Mammary epithelial cell (primary cell): ENCODE measurements at regions of chr3 and their contacts with region 1.

Region 1: DNA sequence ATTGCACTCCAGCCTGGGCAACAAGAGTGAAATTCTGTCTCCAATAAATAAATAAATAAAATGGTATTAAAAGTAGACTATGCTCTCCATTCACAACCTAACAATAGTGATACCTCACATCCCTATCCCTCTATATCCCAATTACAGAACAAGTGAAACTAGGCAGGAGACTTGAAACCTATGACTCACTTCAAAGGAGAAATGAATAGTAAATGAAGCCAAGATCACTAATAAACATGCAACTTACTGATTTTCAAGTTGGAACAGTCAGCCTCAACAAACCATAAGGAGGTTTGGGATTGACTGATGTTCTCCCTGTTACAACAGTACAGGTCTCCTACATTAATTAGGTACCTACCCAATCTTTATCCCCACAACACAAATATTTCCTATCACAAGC is 103.4 kb downstream of the GSK3B start:
- DNase-seq: peak; percentile 78
- H3K4me3 ChIP-seq: no peak overlapping the region
- H3K27ac ChIP-seq: peak overlapping the region; percentile 16
- H3K4me1 ChIP-seq: peaks cover 12% of the 10 kb centered on the region
- H3K27me3 ChIP-seq: no peaks in the 10 kb centered on the region
- CTCF ChIP-seq: no peak

Region 2: DNA sequence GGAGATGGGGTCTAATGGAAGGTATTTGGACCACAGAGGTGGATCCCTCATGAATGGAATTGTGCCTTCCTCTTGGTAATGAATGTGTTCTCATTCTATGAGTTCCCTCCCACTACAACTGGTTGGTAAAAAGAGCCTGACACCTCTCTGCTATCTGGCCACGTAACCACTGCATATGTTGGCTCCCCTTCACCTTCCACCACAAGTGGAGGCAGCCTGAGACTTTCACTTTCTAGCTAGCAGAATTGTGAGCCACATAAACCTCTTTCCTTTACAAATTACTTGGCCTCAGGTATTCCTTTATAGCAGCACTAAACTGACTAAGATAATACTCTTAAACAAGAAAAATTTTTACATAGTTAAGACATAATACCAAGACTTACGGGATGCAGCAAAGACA is 53.7 kb before region 1 on chr3:
- CTCF ChIA-PET with region 1: no interaction called
- dilution Hi-C with region 1: no loop called
- in situ Hi-C with region 1: no loop called
- intact Hi-C with region 1: no loop called
- DNase-seq: peak; percentile 5
- H3K4me3 ChIP-seq: no peak overlapping the region
- H3K27ac ChIP-seq: no peak overlapping the region
- H3K4me1 ChIP-seq: no peaks in the 10 kb centered on the region
- H3K27me3 ChIP-seq: no peaks in the 10 kb centered on the region
- CTCF ChIP-seq: no peak

Region 3: GRCh38 chr3:120021523-120021922 is 30.6 kb after region 1 on chr3:
- CTCF ChIA-PET with region 1: no interaction called
- dilution Hi-C with region 1: no loop called
- in situ Hi-C with region 1: no loop called
- intact Hi-C with region 1: no loop called
- DNase-seq: peak; percentile 15
- H3K4me3 ChIP-seq: no peak overlapping the region
- H3K27ac ChIP-seq: no peak overlapping the region
- H3K4me1 ChIP-seq: no peaks in the 10 kb centered on the region
- H3K27me3 ChIP-seq: no peaks in the 10 kb centered on the region
- CTCF ChIP-seq: no peak

Region 4: DNA sequence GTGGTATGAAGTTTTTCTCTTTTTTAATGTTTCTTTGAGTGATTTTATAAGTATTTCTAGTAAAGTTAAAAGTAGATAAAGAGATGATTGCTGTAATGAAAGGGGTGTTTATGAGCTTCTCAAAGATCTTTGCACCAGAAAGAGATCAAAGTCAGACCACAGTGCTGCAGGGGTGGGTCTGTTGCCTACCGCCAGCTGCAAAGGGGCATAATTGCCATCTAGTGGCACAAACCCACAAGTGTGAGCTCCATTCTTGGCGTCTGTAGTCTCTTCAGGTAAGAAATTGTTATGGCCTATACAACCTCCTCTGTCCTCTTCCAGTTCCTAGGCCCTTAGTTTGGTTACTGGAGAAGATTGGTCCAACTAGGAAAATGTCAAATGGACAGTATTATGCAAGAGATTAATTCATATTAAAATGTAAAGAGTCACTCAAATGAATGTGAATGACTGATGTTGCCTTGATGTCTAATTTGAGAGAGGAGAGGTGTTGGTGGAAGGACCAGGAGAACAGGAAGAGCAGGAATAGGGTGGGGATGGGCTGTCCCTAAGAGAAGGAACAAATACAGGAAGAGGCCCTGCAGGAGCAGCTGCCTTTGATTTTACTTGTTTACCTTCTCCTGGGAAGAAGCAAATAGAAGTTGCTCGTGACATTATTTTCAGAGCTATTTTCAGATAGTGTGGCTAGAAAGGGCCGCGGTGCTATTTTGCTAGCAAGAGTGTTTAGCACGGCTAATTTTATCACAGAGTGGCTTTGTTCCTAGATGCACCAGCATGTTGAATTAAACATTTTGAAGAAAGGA is 156.4 kb after region 1 on chr3:
- CTCF ChIA-PET with region 1: no interaction called
- dilution Hi-C with region 1: no loop called
- in situ Hi-C with region 1: no loop called
- intact Hi-C with region 1: loop called (anchors 1 kb)
- DNase-seq: peak; percentile 61
- H3K4me3 ChIP-seq: no peak overlapping the region
- H3K27ac ChIP-seq: peak overlapping the region; percentile 96
- H3K4me1 ChIP-seq: peaks cover 58% of the 10 kb centered on the region
- H3K27me3 ChIP-seq: no peaks in the 10 kb centered on the region
- CTCF ChIP-seq: peak; percentile 33 to 46